Activated naive CD4-positive, alpha-beta T cell treated with anti-CD3 and anti-CD28 coated beads for 36 hours (primary cell): ENCODE measurements at regions of chr4 and their contacts with region 1.

Region 1: DNA sequence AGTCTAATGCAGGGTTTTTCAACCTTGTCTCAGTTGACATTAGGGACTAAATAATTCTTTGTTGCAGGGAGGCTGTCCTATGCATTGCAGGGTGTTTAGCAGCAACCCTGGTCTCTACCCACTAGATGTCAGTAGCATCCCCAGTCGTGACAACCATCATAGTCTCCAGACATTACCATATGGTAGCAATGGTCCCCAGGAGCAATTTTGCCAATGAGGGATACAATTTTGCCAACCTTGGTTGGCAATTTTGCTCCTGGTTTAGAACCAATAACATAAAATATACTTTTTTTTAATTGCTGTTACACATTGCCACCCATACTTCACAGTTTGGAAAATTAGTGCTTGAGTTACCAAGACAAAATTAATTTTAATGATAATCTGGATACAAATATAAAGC is 6.0 kb downstream of the EREG start:
- DNase-seq: peak; percentile 53
- H3K4me3 Mint-ChIP-seq: no peak overlapping the region
- H3K27ac Mint-ChIP-seq: no peak overlapping the region
- H3K4me1 Mint-ChIP-seq: no peaks in the 10 kb centered on the region
- H3K27me3 Mint-ChIP-seq: peaks cover 25% of the 10 kb centered on the region

Region 2: GRCh38 chr4:74189331-74190043 is 181.4 kb before region 1 on chr4:
- CTCF ChIA-PET with region 1: interaction called, 3 read pairs
- intact Hi-C with region 1: loop called (anchors 5 kb)
- DNase-seq: no peak
- H3K4me3 Mint-ChIP-seq: no peak overlapping the region
- H3K27ac Mint-ChIP-seq: no peak overlapping the region
- H3K4me1 Mint-ChIP-seq: no peaks in the 10 kb centered on the region
- H3K27me3 Mint-ChIP-seq: no peaks in the 10 kb centered on the region

Region 3: DNA sequence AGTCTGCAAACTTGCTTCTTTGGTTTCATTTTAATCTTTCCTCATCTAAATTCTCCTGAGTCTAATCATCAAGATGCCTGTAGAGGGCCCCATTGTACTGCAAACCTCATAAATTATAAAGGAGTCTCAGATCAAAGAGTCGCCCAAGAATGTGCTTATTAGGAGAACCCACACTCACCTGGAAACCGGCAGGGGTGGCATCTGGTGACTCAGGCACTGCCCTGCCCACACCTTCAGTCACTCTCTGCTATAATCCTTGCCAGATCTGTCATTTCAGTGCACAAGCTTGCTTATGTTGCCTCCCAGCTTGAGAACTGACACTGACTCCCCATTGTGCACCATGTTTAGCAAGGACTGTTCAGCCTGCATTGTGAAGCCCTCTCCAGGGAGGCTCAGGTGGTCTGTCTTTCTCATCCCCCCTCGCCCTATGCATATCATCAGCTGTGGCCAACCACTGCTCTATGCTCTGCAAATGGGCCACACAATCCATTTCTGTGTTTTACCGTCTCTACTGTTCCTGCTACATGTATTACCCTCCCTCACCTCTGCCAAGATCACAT is 50.3 kb before region 1 on chr4:
- CTCF ChIA-PET with region 1: interaction called, 5 read pairs
- intact Hi-C with region 1: loop called (anchors 1 kb)
- DNase-seq: peak; percentile 56
- H3K4me3 Mint-ChIP-seq: no peak overlapping the region
- H3K27ac Mint-ChIP-seq: no peak overlapping the region
- H3K4me1 Mint-ChIP-seq: no peaks in the 10 kb centered on the region
- H3K27me3 Mint-ChIP-seq: peaks cover 19% of the 10 kb centered on the region